ENCODE measurements at regions of chr13 and their contacts with region 1.

Region 1: DNA sequence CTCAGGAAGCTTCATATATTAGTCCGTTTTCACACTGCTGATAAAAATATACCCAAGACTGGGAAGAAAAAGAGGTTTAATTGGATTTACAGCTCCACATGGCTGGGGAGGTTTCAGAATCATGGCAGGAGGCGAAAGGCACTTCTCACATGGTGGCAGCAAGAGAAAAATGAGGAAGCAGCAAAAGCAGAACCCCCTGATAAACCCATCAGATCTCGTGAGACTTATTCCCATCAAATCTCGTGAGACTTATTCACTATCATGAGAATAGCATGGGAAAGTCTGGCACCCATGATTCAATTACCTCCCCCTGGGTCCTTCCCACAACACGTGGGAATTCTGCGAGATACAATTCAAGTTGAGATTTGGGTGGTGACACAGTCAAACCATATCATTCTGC is 23.1 kb downstream of the FLT3 start:
- DNase-seq: no peak
- ATAC-seq: no peak
- H3K4me3 ChIP-seq: no peak overlapping the region
- H3K27ac ChIP-seq: no peak overlapping the region
- H3K4me1 ChIP-seq: no peaks in the 10 kb centered on the region
- H3K27me3 ChIP-seq: peaks cover 0 to 3% (median 0%) of the 10 kb centered on the region in 9 donors
- CTCF ChIP-seq: no peak
- POLR2A ChIP-seq: no peak

Region 2: DNA sequence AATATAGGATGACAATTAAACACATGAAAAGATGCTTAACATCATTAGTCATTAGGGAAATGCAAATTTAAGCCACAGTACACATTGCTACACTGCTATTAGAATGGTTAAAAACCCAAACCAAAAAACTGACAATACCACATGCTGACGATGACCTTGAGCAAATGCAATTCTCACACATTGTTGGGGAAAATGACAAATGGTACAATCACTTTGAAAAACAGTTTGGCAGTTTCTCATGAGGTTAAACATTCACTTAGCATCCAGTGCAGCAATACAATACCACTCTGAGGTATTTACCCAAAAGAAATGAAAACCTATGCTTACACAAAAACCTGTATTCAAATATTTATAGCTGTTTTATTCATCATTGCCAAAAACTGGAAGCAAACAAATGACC is 11.8 kb after region 1 on chr13:
- intact Hi-C with region 1: loop called in 1 of 10 experiments (anchors 1 kb)
- DNase-seq: no peak
- ATAC-seq: no peak
- H3K4me3 ChIP-seq: no peak overlapping the region
- H3K27ac ChIP-seq: no peak overlapping the region
- H3K4me1 ChIP-seq: peaks cover 0 to 3% (median 0%) of the 10 kb centered on the region in 12 donors
- H3K27me3 ChIP-seq: peaks cover 0 to 12% (median 0%) of the 10 kb centered on the region in 9 donors
- CTCF ChIP-seq: no peak
- POLR2A ChIP-seq: no peak

Measured in heart left ventricle (tissue), 16 donors.